Activated T-helper 1 cell treated with anti-CD3 and anti-CD28 coated beads, Interleukin-12 subunit alpha, Interleukin-12 subunit beta, Interleukin-2, Interleukin-4 antibody, amounts not matched to agents 30 ng/mL and 10 ng/mL and 1 ng/mL, durations not matched to agents 14 hours and 24 hours and 36 hours (primary cell): ENCODE measurements at regions of chr3 and their contacts with region 1.

Region 1: GRCh38 chr3:158103081-158103886 is 2.9 kb downstream of the SHOX2 start:
- DNase-seq: no peak
- H3K4me3 Mint-ChIP-seq: peak overlapping the region; percentile 40
- H3K27ac Mint-ChIP-seq: peak overlapping the region; percentile 53
- H3K4me1 Mint-ChIP-seq: peaks cover 47% of the 10 kb centered on the region
- H3K27me3 Mint-ChIP-seq: peaks cover 81% of the 10 kb centered on the region

Region 2: GRCh38 chr3:157436583-157437291 is 666.5 kb before region 1 on chr3 and contains the start of gene PTX3:
- intact Hi-C with region 1: loop called (anchors 5 kb)
- DNase-seq: no peak
- H3K4me3 Mint-ChIP-seq: peak within 1 kb of the TSS; percentile 35
- H3K27ac Mint-ChIP-seq: no peak within 1 kb of the TSS
- H3K4me1 Mint-ChIP-seq: peaks cover 8% of the 10 kb centered on the region
- H3K27me3 Mint-ChIP-seq: peaks cover 54% of the 10 kb centered on the region
- total RNA-seq, gene PTX3: not detected in 2 replicates

Region 3: GRCh38 chr3:159273608-159274007 is 1170.3 kb after region 1 on chr3:
- intact Hi-C with region 1: no loop called
- DNase-seq: no peak
- H3K4me3 Mint-ChIP-seq: no peak overlapping the region
- H3K27ac Mint-ChIP-seq: no peak overlapping the region
- H3K4me1 Mint-ChIP-seq: no peaks in the 10 kb centered on the region
- H3K27me3 Mint-ChIP-seq: peaks cover 2% of the 10 kb centered on the region